Activated CD8-positive, alpha-beta T cell treated with anti-CD3 and anti-CD28 coated beads for 36 hours (primary cell): ENCODE measurements at regions of chr7 and their contacts with region 1.

Region 1: GRCh38 chr7:74569501-74570075 is 87.9 kb upstream of the GTF2I start:
- DNase-seq: peak; percentile 2
- ATAC-seq: peak; percentile 24
- H3K4me3 Mint-ChIP-seq: no peak overlapping the region
- H3K27ac Mint-ChIP-seq: peak overlapping the region; percentile 28
- H3K4me1 Mint-ChIP-seq: peaks cover 3% of the 10 kb centered on the region
- H3K27me3 Mint-ChIP-seq: peaks cover 3% of the 10 kb centered on the region
- CTCF ChIP-seq: no peak

Region 2: DNA sequence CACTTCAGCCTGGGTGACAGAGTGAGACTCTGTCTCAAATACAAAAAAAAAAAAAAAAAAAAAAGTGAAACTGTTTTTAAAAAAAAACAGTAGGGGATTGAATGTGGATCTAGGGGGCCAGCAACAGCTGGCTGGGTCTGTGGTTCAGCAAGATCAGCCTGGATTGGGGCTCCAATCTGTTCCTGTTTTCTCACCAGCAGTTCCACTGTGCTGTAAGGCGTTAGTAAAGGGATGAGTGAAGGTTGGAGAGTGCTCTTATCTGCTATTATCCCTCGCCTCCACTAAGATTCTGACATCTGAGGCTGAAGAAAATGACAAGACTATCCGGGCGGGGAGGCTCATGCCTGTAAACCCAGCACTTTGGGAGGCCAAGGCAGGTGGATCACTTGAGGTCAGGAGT is 157.5 kb before region 1 on chr7:
- CTCF ChIA-PET with region 1: interaction called, 11 read pairs
- POLR2A ChIA-PET with region 1: no interaction called
- intact Hi-C with region 1: loop called (anchors 5 kb)
- DNase-seq: no peak
- ATAC-seq: no peak
- H3K4me3 Mint-ChIP-seq: no peak overlapping the region
- H3K27ac Mint-ChIP-seq: no peak overlapping the region
- H3K4me1 Mint-ChIP-seq: no peaks in the 10 kb centered on the region
- H3K27me3 Mint-ChIP-seq: peaks cover 1% of the 10 kb centered on the region
- CTCF ChIP-seq: no peak

Region 3: DNA sequence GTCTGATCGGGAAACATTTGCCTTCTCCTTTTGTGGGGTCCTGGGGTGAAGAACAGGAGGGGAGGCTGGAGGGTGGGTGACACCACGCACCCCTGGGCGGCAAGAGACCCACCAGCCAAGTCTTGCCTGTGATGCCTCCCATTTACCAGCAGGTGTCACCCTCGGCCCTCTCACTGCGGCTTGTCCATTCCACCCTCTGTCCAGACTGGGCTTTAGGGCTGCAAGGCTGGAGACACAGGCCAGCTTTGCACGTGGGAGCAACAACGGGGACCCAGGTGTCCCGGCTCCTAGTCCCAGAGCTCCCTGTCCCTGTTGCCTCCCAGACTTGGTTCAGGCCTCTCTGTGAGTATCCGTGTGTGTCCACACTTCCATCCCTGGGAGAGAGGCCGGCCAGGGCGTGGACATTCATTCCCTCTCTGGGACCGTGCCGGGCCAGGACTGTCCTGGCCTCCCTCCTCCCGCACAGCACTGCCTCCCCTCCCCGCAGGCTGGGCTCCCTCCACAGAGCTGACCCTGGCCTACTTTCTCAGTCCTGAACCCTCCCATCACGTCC is 152.1 kb before region 1 on chr7:
- CTCF ChIA-PET with region 1: interaction called, 20 read pairs
- POLR2A ChIA-PET with region 1: no interaction called
- intact Hi-C with region 1: loop called (anchors 5 kb)
- DNase-seq: peak; percentile 62
- ATAC-seq: peak; percentile 87
- H3K4me3 Mint-ChIP-seq: no peak overlapping the region
- H3K27ac Mint-ChIP-seq: no peak overlapping the region
- H3K4me1 Mint-ChIP-seq: no peaks in the 10 kb centered on the region
- H3K27me3 Mint-ChIP-seq: no peaks in the 10 kb centered on the region
- CTCF ChIP-seq: peak; percentile 97

Region 4: GRCh38 chr7:74449809-74450397 is 119.7 kb before region 1 on chr7:
- CTCF ChIA-PET with region 1: interaction called, 21 read pairs
- POLR2A ChIA-PET with region 1: no interaction called
- intact Hi-C with region 1: no loop called
- DNase-seq: peak; percentile 81
- ATAC-seq: peak; percentile 14
- H3K4me3 Mint-ChIP-seq: no peak overlapping the region
- H3K27ac Mint-ChIP-seq: no peak overlapping the region
- H3K4me1 Mint-ChIP-seq: peaks cover 10% of the 10 kb centered on the region
- H3K27me3 Mint-ChIP-seq: peaks cover 7% of the 10 kb centered on the region
- CTCF ChIP-seq: peak; percentile 86

Region 5: DNA sequence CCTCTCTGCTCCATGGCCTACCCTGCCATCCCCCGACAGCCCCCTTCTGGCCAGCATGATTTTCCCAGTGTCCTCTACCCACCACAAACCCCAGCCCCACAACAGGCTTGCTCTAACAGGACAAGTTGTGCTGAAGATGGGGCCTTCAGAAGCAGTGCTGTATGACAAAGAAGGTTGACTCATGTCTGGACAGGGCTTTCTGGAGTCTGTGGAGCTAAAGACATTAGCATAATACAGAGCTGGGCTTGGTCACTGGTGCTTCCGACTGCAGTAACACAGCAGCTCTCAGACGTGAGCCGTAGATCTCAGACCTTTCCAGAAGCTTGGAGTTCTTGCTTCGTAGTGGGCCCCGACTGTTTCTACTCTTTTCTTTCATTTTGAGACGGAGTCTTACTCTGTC is 15.4 kb before region 1 on chr7:
- CTCF ChIA-PET with region 1: interaction called, 10 read pairs
- POLR2A ChIA-PET with region 1: no interaction called
- intact Hi-C with region 1: no loop called
- DNase-seq: no peak
- ATAC-seq: no peak
- H3K4me3 Mint-ChIP-seq: no peak overlapping the region
- H3K27ac Mint-ChIP-seq: no peak overlapping the region
- H3K4me1 Mint-ChIP-seq: no peaks in the 10 kb centered on the region
- H3K27me3 Mint-ChIP-seq: peaks cover 2% of the 10 kb centered on the region
- CTCF ChIP-seq: no peak

Region 6: GRCh38 chr7:74579800-74580685 is 10.5 kb after region 1 on chr7:
- CTCF ChIA-PET with region 1: interaction called, 10 read pairs
- POLR2A ChIA-PET with region 1: interaction called, 4 read pairs
- intact Hi-C with region 1: no loop called
- DNase-seq: no peak
- ATAC-seq: no peak
- H3K4me3 Mint-ChIP-seq: no peak overlapping the region
- H3K27ac Mint-ChIP-seq: no peak overlapping the region
- H3K4me1 Mint-ChIP-seq: no peaks in the 10 kb centered on the region
- H3K27me3 Mint-ChIP-seq: no peaks in the 10 kb centered on the region
- CTCF ChIP-seq: no peak